Activated CD4-positive, alpha-beta T cell treated with anti-CD3 and anti-CD28 coated beads for 36 hours (primary cell): ENCODE measurements at regions of chr2 and their contacts with region 1.

Region 1: GRCh38 chr2:74198461-74199274 is at the start of gene MTHFD2:
- DNase-seq: peak; percentile 96
- ATAC-seq: peak; percentile 90
- H3K4me3 Mint-ChIP-seq: peak within 1 kb of the TSS; percentile 100
- H3K27ac Mint-ChIP-seq: peak within 1 kb of the TSS; percentile 100
- H3K4me1 Mint-ChIP-seq: peaks cover 40% of the 10 kb centered on the region
- H3K27me3 Mint-ChIP-seq: no peaks in the 10 kb centered on the region
- total RNA-seq, gene MTHFD2: 411 to 453 TPM

Region 2: GRCh38 chr2:74168739-74169138 is 29.9 kb before region 1 on chr2:
- CTCF ChIA-PET with region 1: interaction called, 5 read pairs
- POLR2A ChIA-PET with region 1: interaction called, 14 read pairs
- intact Hi-C with region 1: loop called in 1 of 2 experiments (anchors 5 kb)
- DNase-seq: no peak
- ATAC-seq: peak; percentile 74
- H3K4me3 Mint-ChIP-seq: no peak overlapping the region
- H3K27ac Mint-ChIP-seq: peak overlapping the region; percentile 59
- H3K4me1 Mint-ChIP-seq: peaks cover 21% of the 10 kb centered on the region
- H3K27me3 Mint-ChIP-seq: no peaks in the 10 kb centered on the region

Region 3: DNA sequence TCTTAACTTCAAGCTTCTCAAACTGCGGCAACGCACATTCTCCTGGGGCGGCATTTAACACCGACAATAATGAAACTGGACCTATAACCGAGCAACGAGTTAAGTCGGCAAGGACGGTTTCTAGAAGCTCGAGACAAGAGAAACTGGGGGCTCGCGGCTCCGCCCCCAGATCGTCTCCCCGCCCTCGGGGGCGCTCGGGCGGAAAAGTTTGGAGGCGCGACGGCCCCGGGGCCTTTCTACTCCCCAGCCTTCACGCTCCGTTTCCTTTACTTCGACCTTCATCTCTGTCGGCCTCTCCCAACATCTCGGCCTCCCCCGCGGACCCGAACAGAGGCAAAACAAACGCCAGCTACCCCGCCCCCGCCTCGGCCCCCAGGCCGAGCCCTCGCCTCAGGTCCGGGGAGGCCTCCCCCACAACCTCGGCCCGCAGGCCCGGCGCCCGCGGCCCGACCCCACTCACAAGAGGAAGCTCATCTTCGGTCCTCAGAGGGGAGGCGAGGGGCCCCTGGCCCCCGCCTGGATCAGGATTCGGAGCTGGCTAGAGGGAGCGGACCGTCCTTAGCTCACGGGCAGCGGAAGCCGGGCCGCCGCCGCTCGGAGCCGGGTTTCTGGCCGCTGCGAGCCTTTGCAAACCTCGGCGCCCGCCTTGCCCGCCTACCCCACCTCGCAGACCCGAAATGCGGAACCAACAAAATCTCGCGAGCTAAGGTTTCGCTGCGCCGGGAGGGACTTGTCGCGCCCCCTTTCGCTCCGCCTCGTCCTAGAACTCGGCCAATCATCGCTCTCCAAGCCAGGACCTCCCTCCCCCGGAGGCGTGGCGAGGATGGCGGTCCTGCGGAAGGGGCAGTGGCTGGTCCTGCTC is 20.2 kb before region 1 on chr2 and contains the start of gene MOB1A:
- CTCF ChIA-PET with region 1: interaction called, 19 read pairs
- POLR2A ChIA-PET with region 1: interaction called, 32 read pairs
- intact Hi-C with region 1: loop called (anchors 1 kb)
- DNase-seq: peak; percentile 99
- ATAC-seq: peak; percentile 95
- H3K4me3 Mint-ChIP-seq: peak within 1 kb of the TSS; percentile 82
- H3K27ac Mint-ChIP-seq: peak within 1 kb of the TSS; percentile 87
- H3K4me1 Mint-ChIP-seq: peaks cover 42% of the 10 kb centered on the region
- H3K27me3 Mint-ChIP-seq: no peaks in the 10 kb centered on the region
- total RNA-seq, gene MOB1A: 96.6 to 149 TPM